ENCODE measurements at regions of chr4 and their contacts with region 1.

Region 1: GRCh38 chr4:145936142-145936996 is 2.3 kb downstream of the ZNF827 start:
- DNase-seq: peak; percentile 58
- H3K4me3 Mint-ChIP-seq: peak overlapping the region; percentile 94
- H3K27ac Mint-ChIP-seq: peak overlapping the region; percentile 96
- H3K4me1 Mint-ChIP-seq: peaks cover 44% of the 10 kb centered on the region
- H3K27me3 Mint-ChIP-seq: no peaks in the 10 kb centered on the region

Region 2: DNA sequence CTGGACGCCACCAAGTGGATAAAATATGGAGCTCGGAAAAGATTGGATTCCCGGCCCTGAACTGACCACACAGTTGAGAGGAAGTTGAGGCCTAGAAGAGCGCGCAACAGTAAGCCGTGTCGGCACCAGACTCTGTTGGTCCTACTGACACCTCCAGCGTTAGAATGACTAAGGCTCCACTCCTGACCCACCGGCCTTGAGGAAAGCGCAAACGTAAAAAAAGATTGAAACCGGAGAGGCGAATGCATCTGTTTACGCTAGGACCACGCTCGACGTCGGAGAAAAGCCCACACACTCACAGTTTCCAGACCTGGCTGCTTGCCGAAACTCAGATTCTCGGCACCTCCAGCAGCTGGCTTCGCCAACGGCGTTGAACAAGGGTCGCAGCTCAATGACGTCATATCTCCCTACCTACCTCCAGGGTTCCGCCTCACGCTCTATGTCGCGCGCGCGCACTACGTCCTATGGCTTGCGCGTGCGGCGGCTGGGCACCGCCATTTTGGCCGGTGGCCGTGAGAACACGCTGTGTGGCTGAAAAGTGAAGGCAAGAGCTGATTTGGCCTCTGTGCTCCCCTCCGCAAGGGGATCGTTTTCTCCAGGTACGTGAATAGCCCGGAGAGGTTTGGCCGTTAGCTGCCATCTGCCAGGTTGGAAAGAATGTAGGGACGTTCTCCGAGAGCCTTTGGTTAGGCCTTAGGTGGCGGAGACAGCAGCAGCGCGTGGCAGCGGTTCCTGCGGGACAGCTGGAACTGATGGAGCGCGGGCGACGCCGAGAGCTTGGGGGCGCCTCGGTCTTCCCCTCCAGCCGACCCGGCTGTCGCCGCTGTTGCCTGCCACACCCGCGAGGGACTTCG is 838.3 kb before region 1 on chr4 and contains the starts of genes ABCE1 and ANAPC10:
- intact Hi-C with region 1: loop called (anchors 10 kb)
- DNase-seq: peak; percentile 93
- H3K4me3 Mint-ChIP-seq: peak within 1 kb of the TSS; percentile 95
- H3K27ac Mint-ChIP-seq: peak within 1 kb of the TSS; percentile 99
- H3K4me1 Mint-ChIP-seq: peaks cover 25% of the 10 kb centered on the region
- H3K27me3 Mint-ChIP-seq: no peaks in the 10 kb centered on the region
- total RNA-seq, gene ABCE1: 162 and 173 TPM in 2 replicates
- total RNA-seq, gene ANAPC10: 28.0 and 29.4 TPM in 2 replicates

Region 3: GRCh38 chr4:145732895-145733880 is 203.2 kb before region 1 on chr4:
- intact Hi-C with region 1: loop called (anchors 1 kb)
- DNase-seq: peak; percentile 81
- H3K4me3 Mint-ChIP-seq: peak overlapping the region; percentile 68
- H3K27ac Mint-ChIP-seq: peak overlapping the region; percentile 67
- H3K4me1 Mint-ChIP-seq: peaks cover 18% of the 10 kb centered on the region
- H3K27me3 Mint-ChIP-seq: no peaks in the 10 kb centered on the region

Region 4: DNA sequence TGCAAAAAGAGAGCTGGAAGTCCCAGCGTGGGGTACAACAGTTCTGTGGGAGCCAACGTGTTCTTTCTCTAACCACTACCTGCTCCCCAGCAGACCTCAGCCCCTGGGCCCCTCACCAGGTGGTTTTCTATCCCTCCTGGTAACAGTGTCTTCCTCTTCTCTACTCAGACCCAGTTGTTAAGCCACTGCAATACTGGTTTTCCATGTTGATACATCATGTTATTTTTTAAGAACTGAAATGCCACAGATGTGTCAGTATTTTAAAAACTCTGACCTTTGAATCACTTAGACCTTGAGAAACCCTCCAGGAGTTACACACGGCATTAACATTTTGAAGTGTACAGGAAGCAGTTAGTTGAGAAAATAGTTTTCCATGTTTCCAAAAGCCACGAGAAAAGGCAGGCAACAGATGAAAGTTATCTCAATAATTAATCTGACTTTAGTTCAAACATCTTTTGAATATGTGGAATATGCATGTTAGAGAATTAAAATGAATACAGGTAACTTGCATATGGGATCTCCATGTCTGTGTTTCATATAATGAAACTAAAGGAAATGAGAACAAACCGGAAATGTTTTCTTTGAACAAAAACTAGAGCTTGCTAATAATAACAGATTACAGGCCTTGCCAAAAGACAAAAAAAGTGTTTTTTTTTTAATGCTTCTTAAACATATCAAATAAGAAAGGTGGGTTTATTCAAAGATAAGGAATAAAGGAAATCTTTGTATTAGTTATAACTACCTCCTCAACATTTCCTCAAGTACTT is 106.6 kb before region 1 on chr4:
- intact Hi-C with region 1: loop called (anchors 1 kb)
- DNase-seq: peak; percentile 13
- H3K4me3 Mint-ChIP-seq: peak overlapping the region; percentile 62
- H3K27ac Mint-ChIP-seq: peak overlapping the region; percentile 84
- H3K4me1 Mint-ChIP-seq: peaks cover 46% of the 10 kb centered on the region
- H3K27me3 Mint-ChIP-seq: no peaks in the 10 kb centered on the region

Region 5: GRCh38 chr4:145898926-145899531 is 37.3 kb before region 1 on chr4:
- intact Hi-C with region 1: loop called (anchors 5 kb)
- DNase-seq: no peak
- H3K4me3 Mint-ChIP-seq: no peak overlapping the region
- H3K27ac Mint-ChIP-seq: no peak overlapping the region
- H3K4me1 Mint-ChIP-seq: peaks cover 25% of the 10 kb centered on the region
- H3K27me3 Mint-ChIP-seq: no peaks in the 10 kb centered on the region

Region 6: DNA sequence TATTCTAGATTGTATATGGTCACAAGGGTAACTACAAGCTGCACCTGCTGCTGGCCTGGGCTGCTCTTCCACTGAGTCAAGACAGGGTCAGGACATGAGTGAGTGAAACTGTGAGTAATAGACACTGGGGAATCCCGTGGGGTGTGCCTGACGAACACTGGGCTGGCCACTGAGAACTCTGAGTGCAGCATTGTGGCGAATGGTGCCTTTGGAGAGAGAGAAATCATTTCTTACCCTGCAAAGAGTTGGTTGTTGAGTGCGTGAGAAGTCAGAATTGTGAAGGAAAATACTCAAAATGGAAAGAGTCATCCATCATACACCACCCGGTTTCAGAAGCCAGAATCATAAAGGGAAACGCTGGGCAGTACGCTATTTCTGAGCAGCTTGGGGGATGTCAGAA is 196.1 kb after region 1 on chr4:
- intact Hi-C with region 1: loop called (anchors 1 kb)
- DNase-seq: peak; percentile 15
- H3K4me3 Mint-ChIP-seq: no peak overlapping the region
- H3K27ac Mint-ChIP-seq: peak overlapping the region; percentile 69
- H3K4me1 Mint-ChIP-seq: peaks cover 18% of the 10 kb centered on the region
- H3K27me3 Mint-ChIP-seq: peaks cover 2% of the 10 kb centered on the region

Region 7: GRCh38 chr4:146175541-146176453 is 239.4 kb after region 1 on chr4 and contains the start of gene LSM6:
- intact Hi-C with region 1: loop called (anchors 2 kb)
- DNase-seq: peak; percentile 78
- H3K4me3 Mint-ChIP-seq: peak within 1 kb of the TSS; percentile 86
- H3K27ac Mint-ChIP-seq: peak within 1 kb of the TSS; percentile 71
- H3K4me1 Mint-ChIP-seq: peaks cover 37% of the 10 kb centered on the region
- H3K27me3 Mint-ChIP-seq: no peaks in the 10 kb centered on the region
- total RNA-seq, gene LSM6: 67.2 and 74.1 TPM in 2 replicates

Measured in activated T-helper 2 cell treated with anti-CD3 and anti-CD28 coated beads, Interferon-gamma antibody, Interleukin-2, Interleukin-4, amounts not matched to agents 10 μg/mL and 5 μg/mL and 100 μg/mL, durations not matched to agents 14 hours and 24 hours and 36 hours (primary cell).